AG04450 (cell line): ENCODE measurements at regions of chr17 and their contacts with region 1.

Region 1: GRCh38 chr17:32783602-32784001 is 93.3 kb downstream of the MYO1D start:
- DNase-seq: peak; percentile 27
- H3K4me3 ChIP-seq: no peak overlapping the region
- H3K27ac ChIP-seq: no peak overlapping the region
- H3K27me3 ChIP-seq: no peaks in the 10 kb centered on the region
- CTCF ChIP-seq: peak; percentile 70

Region 2: GRCh38 chr17:32627239-32627996 is 156.2 kb before region 1 on chr17:
- CTCF ChIA-PET with region 1: no interaction called
- POLR2A ChIA-PET with region 1: no interaction called
- DNase-seq: no peak
- H3K4me3 ChIP-seq: no peak overlapping the region
- H3K27ac ChIP-seq: no peak overlapping the region
- H3K27me3 ChIP-seq: peaks cover 3% of the 10 kb centered on the region
- CTCF ChIP-seq: no peak

Region 3: GRCh38 chr17:32769839-32770238 is 13.8 kb before region 1 on chr17:
- CTCF ChIA-PET with region 1: interaction called, 26 read pairs
- POLR2A ChIA-PET with region 1: no interaction called
- DNase-seq: no peak
- H3K4me3 ChIP-seq: no peak overlapping the region
- H3K27ac ChIP-seq: no peak overlapping the region
- H3K27me3 ChIP-seq: no peaks in the 10 kb centered on the region
- CTCF ChIP-seq: no peak

Region 4: GRCh38 chr17:32803544-32803943 is 19.9 kb after region 1 on chr17:
- CTCF ChIA-PET with region 1: interaction called, 26 read pairs
- POLR2A ChIA-PET with region 1: no interaction called
- DNase-seq: no peak
- H3K4me3 ChIP-seq: no peak overlapping the region
- H3K27ac ChIP-seq: no peak overlapping the region
- H3K27me3 ChIP-seq: no peaks in the 10 kb centered on the region
- CTCF ChIP-seq: no peak

Region 5: GRCh38 chr17:32936894-32937500 is 153.4 kb after region 1 on chr17:
- CTCF ChIA-PET with region 1: interaction called, 25 read pairs
- POLR2A ChIA-PET with region 1: no interaction called
- DNase-seq: peak; percentile 42
- H3K4me3 ChIP-seq: no peak overlapping the region
- H3K27ac ChIP-seq: peak overlapping the region; percentile 39
- H3K27me3 ChIP-seq: no peaks in the 10 kb centered on the region
- CTCF ChIP-seq: peak; percentile 76

Region 6: GRCh38 chr17:33750943-33751701 is 967.5 kb after region 1 on chr17:
- CTCF ChIA-PET with region 1: interaction called, 21 read pairs
- POLR2A ChIA-PET with region 1: no interaction called
- DNase-seq: peak; percentile 26
- H3K4me3 ChIP-seq: peak overlapping the region; percentile 31; the same call in 1 of the 2 replicates
- H3K27ac ChIP-seq: no peak overlapping the region
- H3K27me3 ChIP-seq: no peaks in the 10 kb centered on the region
- CTCF ChIP-seq: peak; percentile 86